Calu3 (cell line): ENCODE measurements at regions of chr17 and their contacts with region 1.

Region 1: DNA sequence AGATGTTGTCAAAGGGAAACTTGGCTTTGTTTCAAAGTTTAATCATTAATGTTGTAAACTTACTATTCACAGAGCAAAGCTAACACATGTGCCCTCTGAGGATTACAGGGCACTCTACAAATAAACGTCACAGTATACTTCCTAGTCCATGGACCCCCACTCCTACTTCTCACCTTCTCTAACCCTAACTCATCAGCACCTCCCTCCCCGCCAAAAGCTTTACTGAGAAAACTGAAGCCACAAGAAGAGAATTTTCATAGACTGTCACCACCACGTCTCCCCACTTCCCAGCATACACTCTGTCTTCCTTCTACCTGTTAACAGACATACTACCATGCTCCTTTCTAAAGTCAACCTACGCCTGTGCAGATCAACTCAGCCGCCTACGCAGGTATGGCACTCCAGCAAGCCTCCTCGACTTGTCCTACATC is 29.0 kb downstream of the HELZ start:
- DNase-seq: peak; percentile 15
- H3K4me3 Mint-ChIP-seq: no peak overlapping the region
- H3K27ac Mint-ChIP-seq: no peak overlapping the region
- H3K4me1 Mint-ChIP-seq: peaks cover 2% of the 10 kb centered on the region
- H3K27me3 Mint-ChIP-seq: no peaks in the 10 kb centered on the region
- CTCF ChIP-seq: no peak

Region 2: GRCh38 chr17:67245073-67245755 is 29.2 kb after region 1 on chr17 and contains the start of gene HELZ:
- CTCF ChIA-PET with region 1: interaction called, 10 read pairs
- intact Hi-C with region 1: no loop called
- DNase-seq: peak; percentile 83
- H3K4me3 Mint-ChIP-seq: peak within 1 kb of the TSS; percentile 84
- H3K27ac Mint-ChIP-seq: peak within 1 kb of the TSS; percentile 77
- H3K4me1 Mint-ChIP-seq: peaks cover 28% of the 10 kb centered on the region
- H3K27me3 Mint-ChIP-seq: no peaks in the 10 kb centered on the region
- CTCF ChIP-seq: no peak
- total RNA-seq, gene HELZ: 50.7 and 60.8 TPM in 2 replicates